BJ (cell line): ENCODE measurements at regions of chr7 and their contacts with region 1.

Region 1: GRCh38 chr7:142811154-142811737 is 40.5 kb downstream of the PRSS2 start:
- DNase-seq: no peak
- H3K4me3 ChIP-seq: no peak overlapping the region
- H3K27me3 ChIP-seq: peaks cover 6% of the 10 kb centered on the region; the same call in 1 of the 2 replicates
- CTCF ChIP-seq: peak; percentile 71

Region 2: DNA sequence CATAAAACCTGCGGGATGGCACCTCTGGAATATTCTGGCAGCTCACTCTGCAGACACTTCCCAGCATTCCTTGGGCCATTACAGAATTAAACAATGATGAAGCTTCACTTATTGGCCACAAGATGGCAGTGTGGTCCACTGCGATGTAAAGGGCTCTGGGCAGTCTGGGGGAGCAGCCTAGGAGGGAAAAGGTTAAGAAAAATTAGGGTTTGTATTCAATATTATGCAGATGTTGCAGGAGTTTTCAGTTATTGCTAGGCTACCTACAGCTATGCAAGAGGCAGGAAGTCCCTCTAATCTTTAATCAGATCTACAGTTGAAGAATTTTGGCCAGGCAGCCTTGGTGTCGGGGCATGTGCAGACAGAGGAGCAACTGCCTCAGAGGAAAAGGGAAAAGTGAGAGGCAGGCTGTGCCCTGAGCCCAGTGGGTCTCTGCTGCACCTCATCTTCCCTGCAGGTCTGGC is 295.2 kb before region 1 on chr7:
- CTCF ChIA-PET with region 1: interaction called, 15 read pairs
- POLR2A ChIA-PET with region 1: no interaction called
- DNase-seq: no peak
- H3K4me3 ChIP-seq: no peak overlapping the region
- H3K27me3 ChIP-seq: peaks cover 2% of the 10 kb centered on the region
- CTCF ChIP-seq: peak; percentile 83

Region 3: DNA sequence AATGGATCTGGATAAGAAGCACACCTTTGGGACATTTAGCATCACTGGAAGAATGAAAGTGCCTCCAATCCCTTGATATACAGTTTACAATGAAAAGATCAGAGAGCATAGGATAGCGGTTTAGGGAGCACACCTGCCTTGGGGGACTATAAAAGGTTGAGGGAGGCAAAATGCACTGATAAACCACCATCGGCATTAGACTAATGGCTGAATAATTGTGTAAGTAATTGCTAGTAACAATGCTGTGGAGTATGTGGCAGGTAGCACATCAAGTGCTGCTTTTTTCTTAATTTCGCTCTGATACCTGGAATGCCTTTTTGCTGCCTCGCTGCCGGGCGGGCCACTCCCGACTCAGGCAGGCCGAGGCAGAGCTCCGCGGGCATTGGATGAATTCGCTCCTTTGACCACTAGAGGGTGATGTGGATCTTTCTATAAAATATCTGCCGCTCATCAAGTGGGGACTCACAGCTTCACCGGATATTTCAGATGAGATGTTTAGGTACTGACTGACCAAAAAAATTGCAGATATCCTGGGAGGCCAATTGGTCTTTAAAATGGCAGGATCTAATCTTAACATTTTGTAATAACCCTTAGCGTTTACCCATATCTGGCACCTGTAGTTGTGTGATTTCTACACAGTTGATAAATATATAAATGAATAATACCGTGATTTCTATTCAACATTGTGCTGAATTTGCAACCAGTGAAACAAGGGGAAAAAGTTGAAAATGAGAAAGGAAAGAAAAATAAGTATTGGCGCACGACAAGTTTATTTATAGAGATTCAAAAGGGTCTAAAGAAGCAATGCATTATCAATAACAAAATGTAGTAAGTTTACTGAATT is 178.7 kb before region 1 on chr7:
- CTCF ChIA-PET with region 1: interaction called, 23 read pairs
- POLR2A ChIA-PET with region 1: no interaction called
- DNase-seq: no peak
- H3K4me3 ChIP-seq: no peak overlapping the region
- H3K27me3 ChIP-seq: no peaks in the 10 kb centered on the region
- CTCF ChIP-seq: peak; percentile 79

Region 4: DNA sequence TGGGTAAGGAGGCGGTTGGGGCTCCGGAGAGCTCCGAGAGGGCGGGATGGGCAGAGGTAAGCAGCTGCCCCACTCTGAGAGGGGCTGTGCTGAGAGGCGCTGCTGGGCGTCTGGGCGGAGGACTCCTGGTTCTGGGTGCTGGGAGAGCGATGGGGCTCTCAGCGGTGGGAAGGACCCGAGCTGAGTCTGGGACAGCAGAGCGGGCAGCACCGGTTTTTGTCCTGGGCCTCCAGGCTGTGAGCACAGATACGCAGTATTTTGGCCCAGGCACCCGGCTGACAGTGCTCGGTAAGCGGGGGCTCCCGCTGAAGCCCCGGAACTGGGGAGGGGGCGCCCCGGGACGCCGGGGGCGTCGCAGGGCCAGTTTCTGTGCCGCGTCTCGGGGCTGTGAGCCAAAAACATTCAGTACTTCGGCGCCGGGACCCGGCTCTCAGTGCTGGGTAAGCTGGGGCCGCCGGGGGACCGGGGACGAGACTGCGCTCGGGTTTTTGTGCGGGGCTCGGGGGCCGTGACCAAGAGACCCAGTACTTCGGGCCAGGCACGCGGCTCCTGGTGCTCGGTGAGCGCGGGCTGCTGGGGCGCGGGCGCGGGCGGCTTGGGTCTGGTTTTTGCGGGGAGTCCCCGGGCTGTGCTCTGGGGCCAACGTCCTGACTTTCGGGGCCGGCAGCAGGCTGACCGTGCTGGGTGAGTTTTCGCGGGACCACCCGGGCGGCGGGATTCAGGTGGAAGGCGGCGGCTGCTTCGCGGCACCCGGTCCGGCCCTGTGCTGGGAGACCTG is 14.4 kb before region 1 on chr7:
- CTCF ChIA-PET with region 1: interaction called, 25 read pairs
- POLR2A ChIA-PET with region 1: no interaction called
- DNase-seq: no peak
- H3K4me3 ChIP-seq: peak overlapping the region; percentile 28
- H3K27me3 ChIP-seq: peaks cover 35% of the 10 kb centered on the region
- CTCF ChIP-seq: no peak

Region 5: GRCh38 chr7:142908921-142909890 is 98.0 kb after region 1 on chr7:
- CTCF ChIA-PET with region 1: no interaction called
- POLR2A ChIA-PET with region 1: no interaction called
- DNase-seq: no peak
- H3K4me3 ChIP-seq: no peak overlapping the region
- H3K27me3 ChIP-seq: no peaks in the 10 kb centered on the region
- CTCF ChIP-seq: 0 out of 2 replicates have a peak, but pooled peaks have one; percentile 21